ENCODE measurements at regions of chr15 and their contacts with region 1.

Region 1: GRCh38 chr15:85504749-85505676 is 124.6 kb downstream of the AKAP13 start:
- DNase-seq: no peak
- ATAC-seq: peak; percentile 60
- H3K4me3 ChIP-seq: no peak overlapping the region
- H3K27ac ChIP-seq: no peak overlapping the region
- H3K4me1 ChIP-seq: peaks cover 0 to 4% of the 10 kb centered on the region in 2 donors
- H3K27me3 ChIP-seq: no peaks in the 10 kb centered on the region

Region 2: DNA sequence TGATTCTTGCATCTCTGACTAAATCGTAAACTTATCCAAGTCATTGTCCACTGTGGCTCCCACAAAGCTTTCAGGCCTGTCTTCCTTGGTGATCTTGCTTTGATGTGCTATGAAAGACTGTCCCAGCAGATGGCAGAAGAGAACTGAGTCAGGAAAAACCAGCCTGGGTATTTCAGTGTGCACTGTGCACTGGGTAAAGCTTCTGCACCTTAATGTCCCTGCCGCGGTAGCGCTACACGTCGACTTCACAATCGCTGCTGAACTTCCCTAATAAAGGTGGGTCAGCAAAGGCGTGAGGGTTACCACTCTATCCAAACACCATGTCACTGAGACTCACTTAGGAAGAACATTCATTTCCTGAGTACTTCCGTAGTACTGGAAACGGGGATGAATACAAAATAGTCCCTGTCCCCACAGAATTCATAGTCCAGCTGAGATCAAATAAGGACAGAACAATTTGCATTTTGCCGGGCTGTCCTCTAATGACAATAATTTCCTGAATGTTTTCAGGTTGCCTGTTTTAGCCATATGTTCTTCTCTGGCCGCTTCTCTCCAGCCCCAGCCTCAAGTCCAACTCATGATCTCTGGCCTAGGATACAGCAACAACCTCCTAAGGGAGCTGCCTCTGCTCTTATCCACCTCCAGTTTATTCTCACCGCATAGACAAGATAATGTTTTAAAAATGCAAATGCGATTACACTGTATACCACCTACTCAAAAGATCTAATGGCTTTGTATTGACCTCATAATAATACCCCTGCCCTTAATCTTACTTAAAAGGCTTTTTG is 208.2 kb before region 1 on chr15:
- intact Hi-C with region 1: loop called (anchors 5 to 10 kb)
- DNase-seq: peak in 1 of 2 donors; percentile 53
- ATAC-seq: peak; percentile 91
- H3K4me3 ChIP-seq: peak overlapping the region in 1 of 2 donors; percentile 52
- H3K27ac ChIP-seq: no peak overlapping the region
- H3K4me1 ChIP-seq: no peaks in the 10 kb centered on the region
- H3K27me3 ChIP-seq: no peaks in the 10 kb centered on the region

Region 3: GRCh38 chr15:85330901-85331588 is 174.0 kb before region 1 on chr15:
- intact Hi-C with region 1: loop called (anchors 10 kb)
- DNase-seq: peak; percentile 89 to 90
- ATAC-seq: peak; percentile 91
- H3K4me3 ChIP-seq: no peak overlapping the region
- H3K27ac ChIP-seq: peak overlapping the region in 1 of 2 donors; percentile 62
- H3K4me1 ChIP-seq: no peaks in the 10 kb centered on the region
- H3K27me3 ChIP-seq: no peaks in the 10 kb centered on the region